Activated CD4-positive, alpha-beta memory T cell treated with anti-CD3 and anti-CD28 coated beads, Interleukin-2, amount 10 ng/mL, durations not matched to agents 7 days and 5 days (primary cell): ENCODE measurements at regions of chr1 and their contacts with region 1.

Region 1: GRCh38 chr1:108828022-108828961 is 28.6 kb downstream of the AKNAD1 start:
- DNase-seq: peak; percentile 75
- H3K4me3 Mint-ChIP-seq: no peak overlapping the region
- H3K27ac Mint-ChIP-seq: no peak overlapping the region
- H3K4me1 Mint-ChIP-seq: peaks cover 21% of the 10 kb centered on the region
- H3K27me3 Mint-ChIP-seq: no peaks in the 10 kb centered on the region

Region 2: GRCh38 chr1:108617008-108617723 is 211.1 kb before region 1 on chr1:
- CTCF ChIA-PET with region 1: no interaction called
- POLR2A ChIA-PET with region 1: no interaction called
- DNase-seq: no peak
- H3K4me3 Mint-ChIP-seq: no peak overlapping the region
- H3K27ac Mint-ChIP-seq: no peak overlapping the region
- H3K4me1 Mint-ChIP-seq: no peaks in the 10 kb centered on the region
- H3K27me3 Mint-ChIP-seq: no peaks in the 10 kb centered on the region

Region 3: DNA sequence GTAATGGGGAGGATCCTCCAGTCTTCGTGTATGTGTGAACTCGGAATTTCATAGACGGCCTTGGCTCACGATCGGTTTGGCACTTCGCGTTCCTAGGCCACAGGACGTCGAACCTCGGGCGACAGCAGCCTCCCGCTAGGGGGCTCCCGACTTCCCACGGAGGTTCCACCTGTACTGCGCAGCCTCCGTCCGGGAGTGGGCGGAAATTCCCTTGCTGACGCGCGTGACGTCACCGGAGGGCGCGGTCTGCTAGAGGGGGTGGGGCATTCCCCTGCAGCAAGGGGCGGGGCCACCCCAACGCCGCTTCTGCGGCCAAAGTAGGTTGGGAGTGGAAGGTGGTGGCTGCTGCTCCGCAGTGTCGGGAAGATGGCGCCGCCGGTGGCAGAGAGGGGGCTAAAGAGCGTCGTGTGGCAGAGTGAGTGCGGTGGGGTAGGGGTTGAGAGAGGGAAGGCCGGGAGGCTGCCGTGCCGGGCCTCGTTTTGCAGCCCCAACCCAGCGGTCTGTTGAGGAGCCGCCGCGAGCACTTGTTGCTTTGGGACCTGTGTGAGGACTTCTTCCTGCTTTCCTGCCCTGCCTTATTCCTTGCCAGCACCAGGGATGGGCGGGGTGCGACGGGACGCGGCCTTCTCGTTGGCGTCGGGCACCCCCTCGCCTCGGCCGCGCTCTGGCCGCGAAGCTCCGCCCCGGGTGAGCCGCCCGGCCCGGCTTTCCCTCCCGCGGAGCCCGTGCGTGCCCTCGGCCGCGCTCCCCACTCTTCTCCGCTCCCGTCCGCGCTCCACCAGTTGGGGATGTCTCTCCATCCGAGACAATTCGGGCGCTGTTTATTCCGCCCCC is 81.7 kb before region 1 on chr1 and contains the start of gene STXBP3:
- CTCF ChIA-PET with region 1: no interaction called
- POLR2A ChIA-PET with region 1: no interaction called
- DNase-seq: peak; percentile 100
- H3K4me3 Mint-ChIP-seq: peak within 1 kb of the TSS; percentile 93
- H3K27ac Mint-ChIP-seq: peak within 1 kb of the TSS; percentile 95
- H3K4me1 Mint-ChIP-seq: peaks cover 31% of the 10 kb centered on the region
- H3K27me3 Mint-ChIP-seq: no peaks in the 10 kb centered on the region
- total RNA-seq, gene STXBP3: 55.9 to 60.8 TPM

Region 4: DNA sequence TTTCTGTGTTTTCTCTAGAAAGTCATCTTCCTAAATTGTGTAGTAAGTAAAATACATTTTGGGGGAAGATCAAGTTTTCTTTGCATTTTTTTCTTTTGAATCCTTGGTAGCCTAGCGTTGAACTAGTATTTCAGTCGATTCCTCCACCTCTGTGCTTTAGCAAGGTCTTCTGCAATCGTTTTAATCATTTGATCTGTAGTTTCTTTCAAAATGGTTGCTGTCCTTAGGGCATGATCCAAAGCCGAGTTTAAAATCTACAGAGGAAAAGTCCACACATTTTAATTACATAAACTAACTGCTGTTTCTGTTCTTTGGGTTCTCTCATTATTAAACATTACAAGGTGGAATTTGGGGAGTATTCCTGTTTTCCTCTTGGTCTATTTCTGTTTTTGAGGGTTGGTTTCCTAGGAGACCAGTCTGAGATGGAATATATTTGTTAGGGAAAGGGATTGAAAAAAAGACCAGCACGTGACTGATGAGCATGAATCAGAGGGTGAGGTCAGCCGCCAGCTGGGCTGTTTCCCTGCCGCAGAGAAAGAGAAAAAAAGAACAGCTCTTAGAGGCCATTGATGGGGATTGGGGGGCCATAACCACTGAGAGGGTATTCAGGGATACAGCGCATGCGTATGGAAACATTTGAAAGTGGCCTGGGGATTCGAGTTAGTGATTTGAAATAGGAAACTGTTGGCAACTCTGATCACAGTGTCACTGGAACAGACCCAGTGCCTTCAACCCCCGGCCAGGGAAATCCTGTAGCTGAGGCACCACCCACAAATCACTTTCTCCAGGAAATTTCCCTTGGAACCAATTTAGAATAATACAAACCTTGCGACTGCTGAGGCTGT is 12.0 kb before region 1 on chr1:
- CTCF ChIA-PET with region 1: interaction called, 26 read pairs
- POLR2A ChIA-PET with region 1: interaction called, 4 read pairs
- DNase-seq: no peak
- H3K4me3 Mint-ChIP-seq: no peak overlapping the region
- H3K27ac Mint-ChIP-seq: no peak overlapping the region
- H3K4me1 Mint-ChIP-seq: no peaks in the 10 kb centered on the region
- H3K27me3 Mint-ChIP-seq: peaks cover 7% of the 10 kb centered on the region

Region 5: GRCh38 chr1:108847494-108847893 is 19.2 kb after region 1 on chr1:
- CTCF ChIA-PET with region 1: interaction called, 33 read pairs
- POLR2A ChIA-PET with region 1: no interaction called
- DNase-seq: no peak
- H3K4me3 Mint-ChIP-seq: no peak overlapping the region
- H3K27ac Mint-ChIP-seq: no peak overlapping the region
- H3K4me1 Mint-ChIP-seq: peaks cover 15% of the 10 kb centered on the region
- H3K27me3 Mint-ChIP-seq: peaks cover 8% of the 10 kb centered on the region

Region 6: GRCh38 chr1:108886292-108886691 is 58.0 kb after region 1 on chr1:
- CTCF ChIA-PET with region 1: interaction called, 14 read pairs
- POLR2A ChIA-PET with region 1: no interaction called
- DNase-seq: no peak
- H3K4me3 Mint-ChIP-seq: no peak overlapping the region
- H3K27ac Mint-ChIP-seq: no peak overlapping the region
- H3K4me1 Mint-ChIP-seq: no peaks in the 10 kb centered on the region
- H3K27me3 Mint-ChIP-seq: no peaks in the 10 kb centered on the region

Region 7: GRCh38 chr1:108892356-108893140 is 64.3 kb after region 1 on chr1:
- CTCF ChIA-PET with region 1: interaction called, 181 read pairs
- POLR2A ChIA-PET with region 1: interaction called, 6 read pairs
- DNase-seq: no peak
- H3K4me3 Mint-ChIP-seq: no peak overlapping the region
- H3K27ac Mint-ChIP-seq: no peak overlapping the region
- H3K4me1 Mint-ChIP-seq: no peaks in the 10 kb centered on the region
- H3K27me3 Mint-ChIP-seq: no peaks in the 10 kb centered on the region

Region 8: DNA sequence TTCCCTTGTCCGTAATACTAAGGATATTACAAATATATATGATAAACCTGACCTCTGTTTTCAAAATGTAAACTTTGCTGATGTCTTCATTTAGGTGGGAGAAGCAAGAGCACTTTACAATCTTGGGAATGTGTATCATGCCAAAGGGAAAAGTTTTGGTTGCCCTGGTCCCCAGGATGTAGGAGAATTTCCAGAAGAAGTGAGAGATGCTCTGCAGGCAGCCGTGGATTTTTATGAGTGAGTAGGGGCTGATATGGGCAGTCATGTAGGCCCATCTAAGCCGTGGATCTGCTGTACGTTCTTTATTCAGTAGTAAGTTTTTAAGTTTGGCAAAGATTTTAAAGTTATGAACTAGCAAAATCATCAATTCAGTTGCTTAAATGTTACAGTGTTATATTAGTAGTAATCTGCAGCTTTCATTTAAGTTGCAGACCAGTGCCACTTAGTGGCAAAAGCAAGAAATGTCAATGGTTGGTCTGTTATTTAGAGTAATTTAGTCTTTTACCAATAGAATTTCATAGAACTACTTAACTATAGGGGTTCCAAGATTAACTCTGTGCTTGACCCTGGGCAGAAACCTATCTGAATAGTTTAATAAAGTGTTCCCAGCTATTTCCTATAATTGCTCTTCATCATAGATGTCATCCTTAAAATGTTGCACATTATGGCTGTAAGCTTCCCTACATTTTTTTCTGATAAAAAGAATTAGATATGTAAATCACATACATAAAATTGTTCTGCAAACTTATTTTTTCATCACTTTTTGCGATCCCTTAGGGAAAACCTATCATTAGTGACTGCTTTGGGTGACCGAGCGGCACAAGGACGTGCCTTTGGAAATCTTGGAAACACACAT is 69.8 kb after region 1 on chr1:
- CTCF ChIA-PET with region 1: interaction called, 181 read pairs
- POLR2A ChIA-PET with region 1: interaction called, 6 read pairs
- DNase-seq: peak; percentile 23
- H3K4me3 Mint-ChIP-seq: no peak overlapping the region
- H3K27ac Mint-ChIP-seq: no peak overlapping the region
- H3K4me1 Mint-ChIP-seq: no peaks in the 10 kb centered on the region
- H3K27me3 Mint-ChIP-seq: no peaks in the 10 kb centered on the region

Region 9: GRCh38 chr1:109112652-109113285 is 284.5 kb after region 1 on chr1:
- CTCF ChIA-PET with region 1: interaction called, 11 read pairs
- POLR2A ChIA-PET with region 1: no interaction called
- DNase-seq: peak; percentile 89
- H3K4me3 Mint-ChIP-seq: peak overlapping the region; percentile 74
- H3K27ac Mint-ChIP-seq: peak overlapping the region; percentile 55
- H3K4me1 Mint-ChIP-seq: peaks cover 37% of the 10 kb centered on the region
- H3K27me3 Mint-ChIP-seq: peaks cover 42% of the 10 kb centered on the region